ENCODE measurements at regions of chr6 and their contacts with region 1.

Region 1: DNA sequence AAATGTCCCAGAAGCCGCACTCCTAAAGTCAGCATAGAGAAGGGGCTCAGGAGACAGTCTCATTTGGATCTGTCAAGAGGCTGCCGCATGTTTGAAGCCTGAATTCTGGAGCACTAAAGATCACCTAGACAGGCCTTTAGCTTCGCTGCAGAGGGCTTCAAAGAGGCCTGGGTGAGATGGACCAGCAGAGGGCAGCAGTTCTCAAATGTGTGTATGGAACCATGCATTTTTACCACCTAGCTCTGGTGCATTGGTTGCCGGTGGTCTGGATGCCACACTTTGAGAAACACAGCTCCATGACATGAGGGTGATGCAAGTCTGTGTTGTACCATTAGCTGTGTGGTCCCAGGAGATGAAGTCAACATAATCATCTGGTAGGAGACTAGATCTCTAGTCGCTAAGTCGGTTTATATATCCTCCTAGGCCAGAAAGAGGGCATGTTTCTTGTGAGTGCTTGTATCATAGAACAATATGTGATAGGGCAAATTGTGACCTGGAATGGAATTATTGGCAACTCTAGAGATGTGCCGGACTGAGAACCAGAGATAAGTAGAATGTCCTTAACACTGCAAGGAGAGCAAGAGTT is 64.8 kb downstream of the KIAA0319 start:
- DNase-seq: peak; percentile 57
- H3K4me3 Mint-ChIP-seq: no peak overlapping the region
- H3K27ac Mint-ChIP-seq: no peak overlapping the region
- H3K4me1 Mint-ChIP-seq: peaks cover 6% of the 10 kb centered on the region
- H3K27me3 Mint-ChIP-seq: peaks cover 27% of the 10 kb centered on the region

Region 2: GRCh38 chr6:24431045-24431451 is 150.1 kb before region 1 on chr6:
- intact Hi-C with region 1: loop called (anchors 1 kb)
- DNase-seq: no peak
- H3K4me3 Mint-ChIP-seq: no peak overlapping the region
- H3K27ac Mint-ChIP-seq: no peak overlapping the region
- H3K4me1 Mint-ChIP-seq: no peaks in the 10 kb centered on the region
- H3K27me3 Mint-ChIP-seq: no peaks in the 10 kb centered on the region

Region 3: GRCh38 chr6:24646782-24647181 is 65.6 kb after region 1 on chr6:
- intact Hi-C with region 1: loop called (anchors 2 kb)
- DNase-seq: no peak
- H3K4me3 Mint-ChIP-seq: peak overlapping the region; percentile 86
- H3K27ac Mint-ChIP-seq: peak overlapping the region; percentile 72
- H3K4me1 Mint-ChIP-seq: peaks cover 18% of the 10 kb centered on the region
- H3K27me3 Mint-ChIP-seq: peaks cover 20% of the 10 kb centered on the region

Region 4: GRCh38 chr6:24689964-24690363 is 108.8 kb after region 1 on chr6:
- intact Hi-C with region 1: loop called (anchors 1 kb)
- DNase-seq: no peak
- H3K4me3 Mint-ChIP-seq: no peak overlapping the region
- H3K27ac Mint-ChIP-seq: no peak overlapping the region
- H3K4me1 Mint-ChIP-seq: peaks cover 10% of the 10 kb centered on the region
- H3K27me3 Mint-ChIP-seq: no peaks in the 10 kb centered on the region

Region 5: DNA sequence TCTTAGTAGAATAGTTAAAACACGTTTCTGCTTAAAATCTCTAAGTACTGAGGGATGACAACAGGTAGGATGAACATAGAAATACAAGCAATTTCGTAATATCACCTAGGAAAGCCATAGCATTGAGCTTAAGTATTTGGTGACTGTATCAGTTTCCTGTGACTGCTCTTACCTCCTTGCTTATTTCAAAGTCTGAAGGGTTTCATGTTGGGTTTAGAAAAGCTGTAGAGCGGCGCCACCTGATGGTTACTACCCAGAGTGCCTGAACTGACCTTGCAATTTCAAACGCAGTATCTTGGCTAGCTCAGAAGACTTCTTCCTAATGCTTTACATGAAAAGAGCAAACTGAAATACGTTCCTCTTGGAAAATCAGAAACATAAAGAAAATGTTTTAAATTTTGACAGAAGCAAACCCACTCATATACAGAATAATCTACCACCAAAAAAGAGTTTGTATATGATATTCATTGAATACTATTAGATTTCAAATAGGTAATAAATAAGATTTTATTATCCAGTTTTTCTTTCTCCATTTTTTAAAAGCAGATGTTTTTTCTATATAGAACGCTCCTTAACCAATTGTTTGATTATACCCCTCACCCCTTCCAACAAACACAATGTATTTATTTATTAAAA is 436.9 kb after region 1 on chr6:
- intact Hi-C with region 1: loop called (anchors 1 kb)
- DNase-seq: peak; percentile 70
- H3K4me3 Mint-ChIP-seq: no peak overlapping the region
- H3K27ac Mint-ChIP-seq: no peak overlapping the region
- H3K4me1 Mint-ChIP-seq: peaks cover 50% of the 10 kb centered on the region
- H3K27me3 Mint-ChIP-seq: no peaks in the 10 kb centered on the region

Measured in activated T-helper 1 cell treated with anti-CD3 and anti-CD28 coated beads, Interleukin-12 subunit alpha, Interleukin-12 subunit beta, Interleukin-2, Interleukin-4 antibody, amounts not matched to agents 30 ng/mL and 10 ng/mL and 1 ng/mL, durations not matched to agents 14 hours and 24 hours and 36 hours (primary cell).